ENCODE measurements at regions of chr13 and their contacts with region 1.

Region 1: GRCh38 chr13:45417790-45418534 is at the start of gene SLC25A30:
- DNase-seq: peak; percentile 95
- H3K4me3 Mint-ChIP-seq: peak within 1 kb of the TSS; percentile 92
- H3K27ac Mint-ChIP-seq: peak within 1 kb of the TSS; percentile 99
- H3K4me1 Mint-ChIP-seq: peaks cover 24% of the 10 kb centered on the region
- H3K27me3 Mint-ChIP-seq: no peaks in the 10 kb centered on the region

Region 2: GRCh38 chr13:45269204-45269603 is 148.8 kb before region 1 on chr13:
- CTCF ChIA-PET with region 1: no interaction called
- DNase-seq: no peak
- H3K4me3 Mint-ChIP-seq: no peak overlapping the region
- H3K27ac Mint-ChIP-seq: no peak overlapping the region
- H3K4me1 Mint-ChIP-seq: no peaks in the 10 kb centered on the region
- H3K27me3 Mint-ChIP-seq: no peaks in the 10 kb centered on the region

Region 3: GRCh38 chr13:45393941-45394570 is 23.9 kb before region 1 on chr13:
- CTCF ChIA-PET with region 1: interaction called, 23 read pairs
- DNase-seq: peak; percentile 53
- H3K4me3 Mint-ChIP-seq: no peak overlapping the region
- H3K27ac Mint-ChIP-seq: no peak overlapping the region
- H3K4me1 Mint-ChIP-seq: peaks cover 48% of the 10 kb centered on the region
- H3K27me3 Mint-ChIP-seq: no peaks in the 10 kb centered on the region

Measured in activated naive CD4-positive, alpha-beta T cell treated with anti-CD3 and anti-CD28 coated beads, Interleukin-2, amount 10 ng/mL, durations not matched to agents 7 days and 5 days (primary cell).